CD4-positive, alpha-beta T cell (primary cell): ENCODE measurements at regions of chr19 and their contacts with region 1.

Region 1: DNA sequence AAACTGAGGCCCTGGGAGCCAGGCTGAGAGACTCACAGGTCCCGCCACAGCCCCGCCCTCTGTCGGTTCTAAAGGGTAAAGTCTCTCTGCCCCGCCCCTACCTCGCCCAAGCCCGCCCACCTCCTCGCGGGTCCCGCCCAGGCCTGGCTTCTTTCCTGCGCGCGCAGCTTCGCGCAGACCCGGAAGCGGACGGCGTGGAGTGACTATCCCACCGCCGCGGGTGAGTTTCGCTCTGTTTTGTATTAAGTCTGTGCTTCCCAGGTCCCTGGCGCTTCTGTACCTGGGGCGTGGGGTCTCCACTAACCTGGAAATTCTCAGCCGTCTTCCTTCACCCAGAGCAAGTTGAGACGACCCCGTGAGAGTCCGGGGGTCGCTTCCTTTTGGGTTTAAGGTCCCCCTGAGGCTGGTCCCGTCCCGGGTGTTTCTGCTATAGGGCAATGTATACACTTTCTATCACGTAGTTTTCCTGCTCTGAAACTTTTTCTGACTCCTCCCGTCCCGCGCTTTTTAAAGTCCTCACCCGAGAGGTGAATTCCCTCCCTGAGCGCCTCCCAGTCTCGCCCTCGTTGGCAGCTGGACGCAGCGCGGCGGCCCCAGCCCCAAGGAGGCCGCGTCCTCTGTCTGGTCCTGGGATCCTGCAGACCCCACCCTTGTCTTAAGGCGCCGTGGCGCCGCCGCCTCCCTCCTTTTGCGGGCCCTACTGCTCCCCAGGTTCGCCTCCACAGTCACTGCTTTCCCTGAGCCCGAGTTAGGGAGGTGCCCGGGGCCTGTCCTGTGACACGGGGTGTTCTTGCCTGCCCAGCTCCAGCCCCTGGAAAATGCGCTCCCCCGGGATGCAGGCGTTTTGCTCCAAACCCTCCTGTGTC is at the start of gene ZNF765:
- DNase-seq: peak; percentile 93 to 99 (median 96)
- ATAC-seq: peak; percentile 97
- H3K4me3 ChIP-seq: peak within 1 kb of the TSS; percentile 77
- H3K4me3 Mint-ChIP-seq: peak within 1 kb of the TSS; percentile 93
- H3K27ac ChIP-seq: peak within 1 kb of the TSS; percentile 35 to 65
- H3K27ac Mint-ChIP-seq: peak within 1 kb of the TSS; percentile 93
- H3K4me1 ChIP-seq: peaks cover 13% of the 10 kb centered on the region
- H3K4me1 Mint-ChIP-seq: peaks cover 33% of the 10 kb centered on the region
- H3K27me3 ChIP-seq: no peaks in the 10 kb centered on the region
- H3K27me3 Mint-ChIP-seq: no peaks in the 10 kb centered on the region
- CTCF ChIP-seq: peak; percentile 56
- total RNA-seq, gene ZNF765: 6.7 to 9.0 TPM

Region 2: GRCh38 chr19:53333463-53334449 is 61.5 kb before region 1 on chr19 and contains the start of gene ZNF845:
- CTCF ChIA-PET with region 1: no interaction called
- POLR2A ChIA-PET with region 1: interaction called, 3 read pairs
- intact Hi-C with region 1: loop called in 1 of 2 experiments (anchors 2 kb)
- DNase-seq: peak; percentile 91 to 99 (median 95)
- ATAC-seq: peak; percentile 97
- H3K4me3 ChIP-seq: peak within 1 kb of the TSS; percentile 82
- H3K4me3 Mint-ChIP-seq: peak within 1 kb of the TSS; percentile 95
- H3K27ac ChIP-seq: peak within 1 kb of the TSS in 1 of 2 donors; percentile 72
- H3K27ac Mint-ChIP-seq: peak within 1 kb of the TSS; percentile 84
- H3K4me1 ChIP-seq: peaks cover 17% of the 10 kb centered on the region
- H3K4me1 Mint-ChIP-seq: peaks cover 22% of the 10 kb centered on the region
- H3K27me3 ChIP-seq: peaks cover 0 to 4% of the 10 kb centered on the region in 2 experiments
- H3K27me3 Mint-ChIP-seq: peaks cover 8% of the 10 kb centered on the region
- CTCF ChIP-seq: no peak
- total RNA-seq, gene ZNF845: 7.5 to 8.0 TPM

Region 3: GRCh38 chr19:53355739-53356138 is 39.5 kb before region 1 on chr19:
- CTCF ChIA-PET with region 1: no interaction called
- POLR2A ChIA-PET with region 1: no interaction called
- intact Hi-C with region 1: no loop called
- DNase-seq: no peak
- ATAC-seq: no peak
- H3K4me3 ChIP-seq: no peak overlapping the region
- H3K4me3 Mint-ChIP-seq: no peak overlapping the region
- H3K27ac ChIP-seq: no peak overlapping the region
- H3K27ac Mint-ChIP-seq: no peak overlapping the region
- H3K4me1 ChIP-seq: no peaks in the 10 kb centered on the region
- H3K4me1 Mint-ChIP-seq: no peaks in the 10 kb centered on the region
- H3K27me3 ChIP-seq: no peaks in the 10 kb centered on the region
- H3K27me3 Mint-ChIP-seq: no peaks in the 10 kb centered on the region
- CTCF ChIP-seq: no peak

Region 4: GRCh38 chr19:53381379-53381778 is 13.8 kb before region 1 on chr19:
- CTCF ChIA-PET with region 1: no interaction called
- POLR2A ChIA-PET with region 1: no interaction called
- intact Hi-C with region 1: no loop called
- DNase-seq: no peak
- ATAC-seq: no peak
- H3K4me3 ChIP-seq: no peak overlapping the region
- H3K4me3 Mint-ChIP-seq: no peak overlapping the region
- H3K27ac ChIP-seq: no peak overlapping the region
- H3K27ac Mint-ChIP-seq: no peak overlapping the region
- H3K4me1 ChIP-seq: no peaks in the 10 kb centered on the region
- H3K4me1 Mint-ChIP-seq: no peaks in the 10 kb centered on the region
- H3K27me3 ChIP-seq: no peaks in the 10 kb centered on the region
- H3K27me3 Mint-ChIP-seq: no peaks in the 10 kb centered on the region
- CTCF ChIP-seq: no peak

Region 5: GRCh38 chr19:53431399-53432087 is 36.3 kb after region 1 on chr19 and contains the start of gene ZNF761:
- CTCF ChIA-PET with region 1: no interaction called
- POLR2A ChIA-PET with region 1: no interaction called
- intact Hi-C with region 1: loop called (anchors 2 to 5 kb)
- DNase-seq: peak; percentile 94 to 99 (median 98)
- ATAC-seq: peak; percentile 96
- H3K4me3 ChIP-seq: peak within 1 kb of the TSS; percentile 88
- H3K4me3 Mint-ChIP-seq: peak within 1 kb of the TSS; percentile 98
- H3K27ac ChIP-seq: peak within 1 kb of the TSS; percentile 51 to 80
- H3K27ac Mint-ChIP-seq: peak within 1 kb of the TSS; percentile 96
- H3K4me1 ChIP-seq: peaks cover 15% of the 10 kb centered on the region
- H3K4me1 Mint-ChIP-seq: peaks cover 41% of the 10 kb centered on the region
- H3K27me3 ChIP-seq: no peaks in the 10 kb centered on the region
- H3K27me3 Mint-ChIP-seq: no peaks in the 10 kb centered on the region
- CTCF ChIP-seq: no peak
- total RNA-seq, gene ZNF761: 4.5 to 5.6 TPM

Region 6: GRCh38 chr19:53492153-53492552 is 96.9 kb after region 1 on chr19:
- CTCF ChIA-PET with region 1: no interaction called
- POLR2A ChIA-PET with region 1: no interaction called
- intact Hi-C with region 1: no loop called
- DNase-seq: no peak
- ATAC-seq: no peak
- H3K4me3 ChIP-seq: no peak overlapping the region
- H3K4me3 Mint-ChIP-seq: no peak overlapping the region
- H3K27ac ChIP-seq: no peak overlapping the region
- H3K27ac Mint-ChIP-seq: no peak overlapping the region
- H3K4me1 ChIP-seq: no peaks in the 10 kb centered on the region
- H3K4me1 Mint-ChIP-seq: no peaks in the 10 kb centered on the region
- H3K27me3 ChIP-seq: no peaks in the 10 kb centered on the region
- H3K27me3 Mint-ChIP-seq: no peaks in the 10 kb centered on the region
- CTCF ChIP-seq: no peak